Activated CD8-positive, alpha-beta T cell treated with anti-CD3 and anti-CD28 coated beads for 36 hours (primary cell): ENCODE measurements at regions of chr2 and their contacts with region 1.

Region 1: DNA sequence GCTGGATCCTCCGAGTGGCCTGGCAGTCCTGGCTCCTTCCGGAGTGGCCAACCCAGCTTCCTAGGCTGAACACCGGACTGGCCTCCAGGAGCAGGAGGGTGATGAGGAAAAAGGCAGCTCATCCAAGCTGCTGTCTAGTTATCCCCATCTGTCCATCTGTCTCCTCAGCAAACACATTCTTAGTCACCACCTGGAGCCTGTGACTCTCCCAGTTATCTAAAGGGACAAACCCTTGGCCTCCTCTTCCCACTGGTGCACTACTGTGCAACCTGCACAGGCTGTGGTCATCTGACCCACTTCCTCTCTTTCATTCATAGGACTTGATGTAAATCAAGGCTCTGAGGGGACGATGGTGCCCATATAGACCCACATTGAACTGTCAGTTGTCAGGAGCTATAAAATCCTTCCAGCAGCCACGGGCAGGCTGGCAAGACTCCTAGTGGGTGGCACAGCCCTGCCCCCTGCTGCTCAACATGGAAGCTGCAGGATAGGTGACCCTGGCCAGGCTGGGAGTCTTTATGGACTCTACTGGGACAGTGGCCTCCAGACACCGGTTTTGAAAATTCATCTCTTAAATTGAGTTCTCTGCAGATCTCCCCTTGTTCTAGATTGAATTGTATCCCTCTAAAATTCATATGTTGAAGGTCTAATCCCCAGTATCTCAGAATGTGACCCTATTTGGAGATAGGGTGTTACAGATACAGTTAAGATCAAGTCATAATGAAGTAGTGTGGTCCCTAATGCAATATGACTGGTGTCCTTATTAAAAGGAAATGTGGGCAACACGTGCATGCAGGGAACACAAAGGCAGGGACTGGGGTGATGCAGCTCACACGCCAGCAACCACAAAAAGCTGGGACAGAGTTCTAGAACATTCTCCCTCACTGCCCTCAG is 29.3 kb upstream of the DUSP2 start:
- DNase-seq: peak; percentile 92
- ATAC-seq: peak; percentile 99
- H3K4me3 Mint-ChIP-seq: peak overlapping the region; percentile 29
- H3K27ac Mint-ChIP-seq: peak overlapping the region; percentile 70
- H3K4me1 Mint-ChIP-seq: peaks cover 25% of the 10 kb centered on the region
- H3K27me3 Mint-ChIP-seq: no peaks in the 10 kb centered on the region
- CTCF ChIP-seq: peak; percentile 91

Region 2: DNA sequence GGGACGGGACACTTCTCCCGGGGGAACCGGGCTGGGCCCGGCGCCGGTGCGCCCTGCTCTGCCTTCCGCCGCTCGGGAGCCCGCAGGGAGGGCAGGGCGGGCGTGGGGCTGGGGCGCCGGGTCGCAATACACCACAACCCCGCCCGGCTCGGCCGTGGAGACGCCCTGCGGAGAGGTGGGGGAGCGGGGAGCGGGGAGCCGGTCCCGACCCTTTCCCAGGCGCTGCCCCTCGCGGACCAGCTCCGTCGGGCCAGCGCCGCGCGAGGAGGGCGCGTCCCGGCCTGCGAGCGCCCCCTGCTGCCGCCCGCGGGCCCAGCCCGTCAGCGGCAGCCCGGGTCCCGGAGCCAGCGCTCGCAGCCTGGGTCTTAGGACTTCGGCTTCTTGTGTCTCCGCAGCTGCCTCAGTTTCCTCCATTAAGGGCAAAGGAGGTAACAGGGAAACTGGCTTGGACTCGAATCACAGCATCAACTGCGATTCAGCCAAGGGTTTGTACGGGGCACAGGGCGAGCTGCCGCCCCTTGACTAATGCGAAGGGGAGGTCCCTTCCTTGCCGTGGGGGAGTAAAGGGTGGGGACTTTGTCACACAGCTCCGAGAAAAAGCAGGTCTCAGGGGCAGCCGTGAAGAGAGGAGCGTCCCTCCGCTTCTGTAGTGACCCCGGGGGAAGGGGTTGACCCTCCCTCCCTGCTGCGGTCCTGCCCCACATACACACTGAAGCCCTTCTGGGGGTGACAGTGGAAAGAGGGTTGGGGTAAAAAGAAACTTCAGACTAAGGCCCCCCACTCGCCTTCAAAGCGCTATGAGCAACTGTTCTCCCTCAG is 57.4 kb before region 1 on chr2:
- CTCF ChIA-PET with region 1: interaction called, 94 read pairs
- POLR2A ChIA-PET with region 1: no interaction called
- intact Hi-C with region 1: no loop called
- DNase-seq: peak; percentile 64
- ATAC-seq: peak; percentile 82
- H3K4me3 Mint-ChIP-seq: peak overlapping the region; percentile 64
- H3K27ac Mint-ChIP-seq: no peak overlapping the region
- H3K4me1 Mint-ChIP-seq: peaks cover 22% of the 10 kb centered on the region
- H3K27me3 Mint-ChIP-seq: peaks cover 32% of the 10 kb centered on the region
- CTCF ChIP-seq: peak; percentile 92

Region 3: GRCh38 chr2:96138179-96139145 is 36.0 kb before region 1 on chr2 and contains the start of gene ASTL:
- CTCF ChIA-PET with region 1: interaction called, 540 read pairs
- POLR2A ChIA-PET with region 1: interaction called, 690 read pairs
- intact Hi-C with region 1: loop called (anchors 1 kb)
- DNase-seq: peak; percentile 80
- ATAC-seq: peak; percentile 48
- H3K4me3 Mint-ChIP-seq: peak within 1 kb of the TSS; percentile 7
- H3K27ac Mint-ChIP-seq: peak within 1 kb of the TSS; percentile 55
- H3K4me1 Mint-ChIP-seq: peaks cover 29% of the 10 kb centered on the region
- H3K27me3 Mint-ChIP-seq: no peaks in the 10 kb centered on the region
- CTCF ChIP-seq: peak; percentile 71
- total RNA-seq, gene ASTL: 1.8 to 2.7 TPM

Region 4: GRCh38 chr2:96157651-96158553 is 16.6 kb before region 1 on chr2:
- CTCF ChIA-PET with region 1: interaction called, 43 read pairs
- POLR2A ChIA-PET with region 1: interaction called, 5 read pairs
- intact Hi-C with region 1: no loop called
- DNase-seq: peak; percentile 99
- ATAC-seq: peak; percentile 73
- H3K4me3 Mint-ChIP-seq: peak overlapping the region; percentile 42
- H3K27ac Mint-ChIP-seq: peak overlapping the region; percentile 93
- H3K4me1 Mint-ChIP-seq: peaks cover 92% of the 10 kb centered on the region
- H3K27me3 Mint-ChIP-seq: no peaks in the 10 kb centered on the region
- CTCF ChIP-seq: no peak

Region 5: GRCh38 chr2:96208143-96209010 is 33.9 kb after region 1 on chr2 and contains the start of gene STARD7:
- CTCF ChIA-PET with region 1: interaction called, 16 read pairs
- POLR2A ChIA-PET with region 1: interaction called, 8 read pairs
- intact Hi-C with region 1: no loop called
- DNase-seq: peak; percentile 99
- ATAC-seq: peak; percentile 93
- H3K4me3 Mint-ChIP-seq: peak within 1 kb of the TSS; percentile 89
- H3K27ac Mint-ChIP-seq: peak within 1 kb of the TSS; percentile 91
- H3K4me1 Mint-ChIP-seq: peaks cover 45% of the 10 kb centered on the region
- H3K27me3 Mint-ChIP-seq: no peaks in the 10 kb centered on the region
- CTCF ChIP-seq: no peak
- total RNA-seq, gene STARD7: 145 to 149 TPM